ENCODE measurements at regions of chr12 and their contacts with region 1.

Region 1: DNA sequence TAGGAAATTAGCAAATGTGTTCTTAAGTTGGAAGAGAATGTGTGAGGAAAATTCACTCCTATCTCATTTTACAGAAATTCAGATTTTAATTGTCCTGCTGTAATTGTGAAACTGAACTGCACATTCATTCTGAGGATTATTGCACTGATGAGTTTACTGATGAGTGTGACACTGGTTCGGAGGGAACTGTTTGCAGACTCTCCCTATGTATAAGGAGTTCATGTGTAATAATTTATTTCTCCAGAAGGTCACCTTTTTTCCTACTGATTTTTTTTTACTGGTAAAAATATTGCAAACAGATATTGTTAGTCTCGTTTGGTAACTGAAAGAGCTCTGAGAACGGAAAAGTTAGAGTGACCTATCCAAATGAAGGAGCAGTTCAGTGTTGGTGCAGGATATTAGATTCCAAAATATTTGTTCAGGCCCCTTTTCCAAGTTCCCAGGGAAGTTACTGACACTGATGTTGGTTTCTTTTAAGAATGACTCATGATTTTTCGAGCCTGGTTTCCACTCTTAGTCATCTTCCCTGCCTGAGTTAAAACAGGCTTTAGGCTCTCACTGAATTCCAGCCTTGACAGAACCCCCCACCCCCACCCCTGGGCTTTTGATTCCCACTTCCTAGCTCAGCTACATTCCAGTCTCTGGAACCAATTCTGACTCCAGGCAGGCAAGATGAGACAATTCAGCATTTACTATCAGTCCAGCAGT is 18.4 kb downstream of the ANO6 start:
- DNase-seq: peak; percentile 47 to 97
- H3K4me3 ChIP-seq: peak overlapping the region; percentile 44; the same call in 1 of the 2 replicates
- H3K27ac ChIP-seq: peak overlapping the region; percentile 100
- H3K4me1 ChIP-seq: peaks cover 62% of the 10 kb centered on the region
- H3K27me3 ChIP-seq: no peaks in the 10 kb centered on the region
- CTCF ChIP-seq: no peak

Region 2: DNA sequence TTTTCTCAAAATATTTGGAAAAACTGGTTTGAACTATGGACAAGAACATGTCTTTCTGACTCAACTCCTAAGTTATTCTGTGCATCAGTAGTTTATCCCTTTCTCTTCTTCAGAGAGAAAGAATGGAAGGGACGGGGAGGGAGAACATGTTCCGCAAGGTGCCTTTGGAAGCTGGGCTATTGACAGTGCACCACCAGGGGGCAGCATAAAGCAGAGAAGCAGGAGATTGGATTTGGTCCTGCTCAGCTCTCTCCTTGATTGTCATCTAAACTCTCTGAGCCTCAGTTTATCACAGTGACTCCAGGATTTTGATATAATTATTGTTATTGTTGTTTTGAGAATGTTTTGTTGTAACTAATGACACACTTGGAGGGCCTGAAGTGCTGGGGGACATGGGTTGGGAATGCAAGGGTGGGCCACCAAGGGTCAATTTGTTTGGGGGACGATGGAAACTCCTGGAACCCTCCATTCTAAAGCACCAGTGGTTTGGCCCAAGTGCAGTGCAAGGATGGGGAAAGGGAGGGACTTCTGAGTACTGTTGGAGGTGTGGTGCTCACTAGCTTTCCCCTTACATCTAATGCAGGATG is 63.7 kb before region 1 on chr12:
- CTCF ChIA-PET with region 1: no interaction called
- POLR2A ChIA-PET with region 1: no interaction called
- intact Hi-C with region 1: loop called (anchors 5 kb)
- DNase-seq: peak; percentile 36 to 69
- H3K4me3 ChIP-seq: no peak overlapping the region
- H3K27ac ChIP-seq: no peak overlapping the region
- H3K4me1 ChIP-seq: no peaks in the 10 kb centered on the region
- H3K27me3 ChIP-seq: no peaks in the 10 kb centered on the region
- CTCF ChIP-seq: peak; percentile 92

Region 3: DNA sequence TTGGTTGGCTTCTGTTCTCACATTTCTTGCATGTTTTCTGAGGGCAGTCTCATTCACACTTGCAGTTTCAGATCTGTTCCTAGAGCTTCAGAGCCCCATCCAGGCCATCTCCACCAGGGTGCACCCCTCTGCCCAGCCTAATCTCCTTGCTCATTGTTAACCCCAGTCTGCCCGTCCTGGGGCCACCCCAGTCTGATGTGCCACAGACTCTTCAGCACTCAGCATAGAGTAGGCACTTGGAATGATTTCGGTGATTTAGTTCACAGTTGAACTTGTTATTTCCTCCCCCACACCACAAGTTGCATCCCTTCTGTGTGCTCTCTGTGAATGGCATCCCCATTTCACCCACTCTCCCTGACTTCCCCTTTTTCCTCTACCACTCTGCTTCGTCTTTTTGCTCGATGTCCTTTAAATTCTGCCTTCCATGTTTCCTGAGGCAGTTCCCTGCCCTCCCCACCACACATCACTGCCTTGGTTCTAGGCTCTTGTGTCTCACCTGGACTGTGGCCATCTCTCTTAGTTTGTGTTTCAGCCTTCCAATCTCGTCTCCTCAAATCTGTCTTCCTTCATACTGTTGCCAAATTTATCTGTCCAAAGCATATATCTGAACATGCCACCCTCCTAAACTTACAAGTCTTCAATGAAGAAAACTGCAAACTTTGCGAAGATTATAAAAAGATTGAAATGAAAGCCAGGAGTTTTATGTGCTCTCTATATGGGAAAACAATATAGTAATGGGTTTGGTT is 23.1 kb after region 1 on chr12:
- CTCF ChIA-PET with region 1: interaction called, 13 read pairs
- POLR2A ChIA-PET with region 1: interaction called, 4 read pairs
- intact Hi-C with region 1: loop called (anchors 1 kb)
- DNase-seq: no peak
- H3K4me3 ChIP-seq: no peak overlapping the region
- H3K27ac ChIP-seq: peak overlapping the region; percentile 92; the same call in 1 of the 2 replicates
- H3K4me1 ChIP-seq: peaks cover 63% of the 10 kb centered on the region
- H3K27me3 ChIP-seq: no peaks in the 10 kb centered on the region
- CTCF ChIP-seq: no peak

Region 4: GRCh38 chr12:45284131-45284901 is 50.0 kb after region 1 on chr12:
- CTCF ChIA-PET with region 1: no interaction called
- POLR2A ChIA-PET with region 1: no interaction called
- intact Hi-C with region 1: loop called (anchors 2 kb)
- DNase-seq: peak; percentile 48 to 95
- H3K4me3 ChIP-seq: peak overlapping the region; percentile 38; the same call in 1 of the 2 replicates
- H3K27ac ChIP-seq: peak overlapping the region; percentile 90
- H3K4me1 ChIP-seq: peaks cover 48% of the 10 kb centered on the region
- H3K27me3 ChIP-seq: no peaks in the 10 kb centered on the region
- CTCF ChIP-seq: 0 out of 2 replicates have a peak, but pooled peaks have one; percentile 18

Region 5: GRCh38 chr12:45298716-45299692 is 64.7 kb after region 1 on chr12:
- CTCF ChIA-PET with region 1: no interaction called
- POLR2A ChIA-PET with region 1: no interaction called
- intact Hi-C with region 1: loop called (anchors 5 kb)
- DNase-seq: peak; percentile 52 to 93
- H3K4me3 ChIP-seq: peak overlapping the region; percentile 12; the same call in 1 of the 2 replicates
- H3K27ac ChIP-seq: peak overlapping the region; percentile 90
- H3K4me1 ChIP-seq: peaks cover 51% of the 10 kb centered on the region
- H3K27me3 ChIP-seq: no peaks in the 10 kb centered on the region
- CTCF ChIP-seq: no peak

Region 6: GRCh38 chr12:45409966-45410365 is 175.7 kb after region 1 on chr12:
- CTCF ChIA-PET with region 1: no interaction called
- POLR2A ChIA-PET with region 1: no interaction called
- intact Hi-C with region 1: no loop called
- DNase-seq: no peak
- H3K4me3 ChIP-seq: no peak overlapping the region
- H3K27ac ChIP-seq: no peak overlapping the region
- H3K4me1 ChIP-seq: no peaks in the 10 kb centered on the region
- H3K27me3 ChIP-seq: no peaks in the 10 kb centered on the region
- CTCF ChIP-seq: no peak